ENCODE measurements at regions of chr13 and their contacts with region 1.

Region 1: GRCh38 chr13:60028021-60028420 is 135.7 kb downstream of the DIAPH3 start:
- DNase-seq: no peak
- H3K4me3 ChIP-seq: no peak overlapping the region
- H3K27ac ChIP-seq: no peak overlapping the region
- H3K4me1 ChIP-seq: no peaks in the 10 kb centered on the region
- H3K27me3 ChIP-seq: no peaks in the 10 kb centered on the region
- CTCF ChIP-seq: no peak

Region 2: GRCh38 chr13:59690857-59691500 is 337.0 kb before region 1 on chr13:
- CTCF ChIA-PET with region 1: no interaction called
- POLR2A ChIA-PET with region 1: no interaction called
- intact Hi-C with region 1: no loop called
- DNase-seq: no peak
- H3K4me3 ChIP-seq: no peak overlapping the region
- H3K27ac ChIP-seq: no peak overlapping the region
- H3K4me1 ChIP-seq: peaks cover 8% of the 10 kb centered on the region
- H3K27me3 ChIP-seq: no peaks in the 10 kb centered on the region
- CTCF ChIP-seq: no peak

Region 3: GRCh38 chr13:60074397-60074796 is 46.4 kb after region 1 on chr13:
- CTCF ChIA-PET with region 1: no interaction called
- POLR2A ChIA-PET with region 1: no interaction called
- intact Hi-C with region 1: loop called (anchors 5 kb)
- DNase-seq: no peak
- H3K4me3 ChIP-seq: no peak overlapping the region
- H3K27ac ChIP-seq: no peak overlapping the region
- H3K4me1 ChIP-seq: no peaks in the 10 kb centered on the region
- H3K27me3 ChIP-seq: no peaks in the 10 kb centered on the region
- CTCF ChIP-seq: no peak